Activated CD4-positive, alpha-beta T cell treated with anti-CD3 and anti-CD28 coated beads, Interleukin-2, amount 10 ng/mL, durations not matched to agents 7 days and 5 days (primary cell): ENCODE measurements at regions of chr1 and their contacts with region 1.

Region 1: GRCh38 chr1:203267347-203267846 is 37.9 kb upstream of the BTG2 start:
- DNase-seq: peak; percentile 91
- H3K4me3 Mint-ChIP-seq: peak overlapping the region; percentile 79
- H3K27ac Mint-ChIP-seq: peak overlapping the region; percentile 86
- H3K4me1 Mint-ChIP-seq: peaks cover 32% of the 10 kb centered on the region
- H3K27me3 Mint-ChIP-seq: peaks cover 1% of the 10 kb centered on the region

Region 2: DNA sequence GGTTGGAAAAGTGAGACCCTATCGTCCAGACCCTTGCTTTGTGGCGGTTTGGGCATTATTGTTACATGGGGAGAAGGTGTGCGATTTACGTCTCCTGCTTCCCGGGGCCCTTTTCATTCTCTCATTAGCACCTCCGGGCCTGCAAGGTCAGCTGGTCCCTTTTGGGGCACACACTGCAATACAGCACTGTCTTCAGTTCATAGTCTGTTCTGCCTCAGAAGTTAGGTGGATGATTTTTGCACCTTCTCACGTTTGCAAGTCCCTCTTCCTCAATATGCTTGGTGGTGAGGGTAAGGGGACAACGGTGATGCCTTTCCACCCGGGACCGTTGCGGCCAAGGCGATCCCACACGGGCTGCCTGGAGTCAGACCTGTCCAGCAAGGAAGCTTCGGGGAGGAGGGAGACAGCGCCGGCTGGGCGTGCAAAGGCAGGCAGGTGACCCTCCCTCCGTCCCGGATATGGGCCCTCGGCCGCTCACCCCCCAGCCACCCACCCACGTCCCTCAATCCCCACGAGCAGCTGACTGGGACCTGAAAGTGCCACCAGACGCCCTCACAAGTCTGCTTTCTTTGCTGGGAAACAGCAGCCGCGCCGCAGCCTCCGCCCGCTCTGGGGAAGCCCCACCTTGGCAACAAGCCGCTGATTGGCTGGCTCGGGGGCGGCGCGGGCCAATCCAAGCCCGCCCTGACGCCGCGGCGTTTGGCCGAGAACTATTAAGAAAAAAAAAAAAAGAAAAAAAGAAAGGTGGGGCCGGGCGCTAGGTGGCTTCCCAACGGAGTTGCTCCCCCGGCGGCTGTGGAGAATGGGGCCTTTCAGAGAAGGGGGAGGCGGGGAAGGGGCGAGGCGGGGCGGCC is 59.7 kb after region 1 on chr1:
- CTCF ChIA-PET with region 1: interaction called, 299 read pairs
- POLR2A ChIA-PET with region 1: no interaction called
- DNase-seq: peak; percentile 95
- H3K4me3 Mint-ChIP-seq: peak overlapping the region; percentile 73
- H3K27ac Mint-ChIP-seq: peak overlapping the region; percentile 98
- H3K4me1 Mint-ChIP-seq: peaks cover 64% of the 10 kb centered on the region
- H3K27me3 Mint-ChIP-seq: no peaks in the 10 kb centered on the region

Region 3: GRCh38 chr1:203475012-203475981 is 207.9 kb after region 1 on chr1 and contains the start of gene PRELP:
- CTCF ChIA-PET with region 1: interaction called, 16 read pairs
- POLR2A ChIA-PET with region 1: no interaction called
- DNase-seq: no peak
- H3K4me3 Mint-ChIP-seq: no peak within 1 kb of the TSS
- H3K27ac Mint-ChIP-seq: no peak within 1 kb of the TSS
- H3K4me1 Mint-ChIP-seq: no peaks in the 10 kb centered on the region
- H3K27me3 Mint-ChIP-seq: peaks cover 9% of the 10 kb centered on the region
- total RNA-seq, gene PRELP: not detected

Region 4: GRCh38 chr1:203493901-203494300 is 226.5 kb after region 1 on chr1 and contains the start of gene OPTC:
- CTCF ChIA-PET with region 1: interaction called, 64 read pairs
- POLR2A ChIA-PET with region 1: no interaction called
- DNase-seq: no peak
- H3K4me3 Mint-ChIP-seq: no peak within 1 kb of the TSS
- H3K27ac Mint-ChIP-seq: no peak within 1 kb of the TSS
- H3K4me1 Mint-ChIP-seq: peaks cover 2% of the 10 kb centered on the region
- H3K27me3 Mint-ChIP-seq: no peaks in the 10 kb centered on the region
- total RNA-seq, gene OPTC: not detected